ENCODE measurements at regions of chr4 and their contacts with region 1.

Region 1: DNA sequence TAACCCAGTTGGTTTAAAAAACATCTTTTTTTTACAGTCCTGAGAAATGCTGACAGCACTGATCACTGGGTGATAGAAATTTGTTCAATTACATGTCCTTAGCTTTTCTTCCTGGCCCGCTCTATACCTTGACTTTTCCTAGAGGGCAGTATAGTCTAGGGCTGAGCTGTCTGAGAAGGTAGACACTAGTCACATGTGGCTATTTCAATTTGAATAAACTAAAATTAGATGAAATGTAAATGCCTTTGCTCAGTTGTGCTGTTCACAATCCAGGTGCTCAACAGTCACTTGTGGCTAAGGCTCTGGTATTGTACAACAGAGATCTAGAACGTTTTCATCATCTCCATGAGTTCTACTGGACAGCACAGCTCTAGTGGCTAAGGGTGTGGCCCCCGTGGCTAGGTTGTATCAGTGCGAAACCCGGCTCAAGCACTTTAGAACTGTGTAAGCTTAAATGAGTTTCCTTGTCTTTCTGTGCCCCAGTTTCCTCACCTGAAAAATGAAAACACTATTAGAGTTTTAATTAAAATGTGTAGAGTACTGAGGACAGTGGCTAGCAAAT is 111.6 kb upstream of the WDR17 start:
- DNase-seq: no peak
- H3K4me3 ChIP-seq: no peak overlapping the region
- H3K27ac ChIP-seq: peak overlapping the region in 2 of 59 donors; percentile 4 to 6
- H3K27me3 ChIP-seq: no peaks in the 10 kb centered on the region
- CTCF ChIP-seq: no peak

Region 2: DNA sequence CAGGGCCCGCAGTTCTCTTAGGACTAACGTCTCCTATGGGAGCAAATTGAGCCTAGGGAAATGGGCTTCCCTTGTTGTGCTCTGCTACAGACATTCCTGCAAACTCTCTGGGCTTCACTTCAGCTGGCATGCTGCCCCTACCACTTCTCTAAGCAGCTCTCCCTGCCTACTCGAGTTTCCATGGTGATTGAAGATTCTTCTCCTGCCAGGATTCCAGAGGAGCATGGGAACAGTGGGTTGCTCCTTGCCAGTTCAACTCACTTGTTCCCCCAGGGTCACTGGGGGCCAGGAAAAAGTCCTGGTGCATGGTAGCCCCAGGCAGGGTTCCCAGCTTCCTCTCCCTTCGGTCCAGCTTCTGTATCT is 90.5 kb after region 1 on chr4:
- intact Hi-C with region 1: loop called in 1 of 2 experiments (anchors 5 kb)
- DNase-seq: peak; percentile 36 to 90 (median 74)
- H3K4me3 ChIP-seq: peak overlapping the region in 11 of 59 donors; percentile 2 to 33 (median 12)
- H3K27ac ChIP-seq: peak overlapping the region in 52 of 59 donors; percentile 1 to 86 (median 64)
- H3K27me3 ChIP-seq: no peaks in the 10 kb centered on the region
- CTCF ChIP-seq: no peak

Region 3: GRCh38 chr4:176065435-176066291 is 111.6 kb after region 1 on chr4 and contains the start of gene WDR17:
- intact Hi-C with region 1: no loop called
- DNase-seq: peak; percentile 93 to 97 (median 96)
- H3K4me3 ChIP-seq: peak within 1 kb of the TSS; percentile 61 to 94 (median 80)
- H3K27ac ChIP-seq: peak within 1 kb of the TSS in 54 of 59 donors; percentile 20 to 87 (median 71)
- H3K27me3 ChIP-seq: no peaks in the 10 kb centered on the region
- CTCF ChIP-seq: peak in 11 of 56 donors; percentile 4 to 34 (median 14)
- total RNA-seq, gene WDR17: 31.8 to 105 (median 65.6) TPM